ENCODE measurements at regions of chr15 and their contacts with region 1.

Region 1: GRCh38 chr15:56245871-56246814 is 2.5 kb upstream of the RFX7 start:
- DNase-seq: peak; percentile 58 to 88
- H3K4me3 ChIP-seq: peak overlapping the region; percentile 58; the same call in 1 of the 2 replicates
- H3K27ac ChIP-seq: 0 out of 2 replicates have a peak overlapping the region, but pooled peaks have one; percentile 20
- H3K4me1 ChIP-seq: peaks cover 38% of the 10 kb centered on the region
- H3K27me3 ChIP-seq: no peaks in the 10 kb centered on the region
- CTCF ChIP-seq: peak; percentile 92

Region 2: GRCh38 chr15:55846116-55846707 is 399.9 kb before region 1 on chr15:
- CTCF ChIA-PET with region 1: no interaction called
- POLR2A ChIA-PET with region 1: no interaction called
- intact Hi-C with region 1: no loop called
- DNase-seq: peak; percentile 32 to 41
- H3K4me3 ChIP-seq: no peak overlapping the region
- H3K27ac ChIP-seq: no peak overlapping the region
- H3K4me1 ChIP-seq: no peaks in the 10 kb centered on the region
- H3K27me3 ChIP-seq: no peaks in the 10 kb centered on the region
- CTCF ChIP-seq: peak; percentile 91

Region 3: DNA sequence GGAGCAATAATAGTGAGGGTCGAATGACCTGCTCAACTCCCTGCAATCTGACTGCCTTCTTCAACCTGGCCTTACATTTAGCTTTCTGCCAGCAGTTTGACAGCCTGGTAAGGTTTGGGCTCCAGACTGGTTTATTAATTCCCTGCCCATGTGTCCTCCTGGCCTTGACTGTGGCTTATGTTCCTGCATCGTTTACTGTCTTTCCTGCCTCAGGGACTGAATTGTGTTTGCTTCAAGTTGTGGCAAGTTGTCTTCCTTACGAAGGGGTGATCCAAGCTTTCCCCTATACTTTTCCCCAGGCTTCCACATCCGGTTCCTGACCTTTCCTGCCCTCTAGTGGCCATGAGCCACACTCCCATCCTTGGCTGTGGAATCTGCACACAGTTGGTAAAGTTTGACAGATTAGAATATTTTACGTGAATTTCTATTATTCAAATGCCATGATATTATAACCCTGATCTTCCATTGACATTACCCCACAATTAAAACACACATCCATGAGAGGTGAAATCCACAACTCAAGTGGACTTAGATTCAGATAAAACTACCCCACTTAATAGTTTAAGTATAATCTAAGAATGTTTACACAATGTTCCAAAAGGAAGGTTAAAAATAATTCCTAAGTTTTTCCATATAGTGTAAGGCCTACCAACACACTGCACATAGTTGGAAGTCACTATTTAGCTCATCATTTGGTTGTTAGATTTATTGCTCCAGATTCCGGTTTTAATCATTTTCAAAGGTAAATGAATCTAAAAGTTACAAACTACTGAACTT is 348.4 kb before region 1 on chr15:
- CTCF ChIA-PET with region 1: no interaction called
- POLR2A ChIA-PET with region 1: no interaction called
- intact Hi-C with region 1: loop called (anchors 5 kb)
- DNase-seq: peak in 1 of 2 experiments; percentile 35
- H3K4me3 ChIP-seq: no peak overlapping the region
- H3K27ac ChIP-seq: 0 out of 2 replicates have a peak overlapping the region, but pooled peaks have one; percentile 16
- H3K4me1 ChIP-seq: no peaks in the 10 kb centered on the region
- H3K27me3 ChIP-seq: no peaks in the 10 kb centered on the region
- CTCF ChIP-seq: peak; percentile 66

Region 4: GRCh38 chr15:56040081-56041035 is 205.8 kb before region 1 on chr15:
- CTCF ChIA-PET with region 1: interaction called, 3 read pairs
- POLR2A ChIA-PET with region 1: no interaction called
- intact Hi-C with region 1: loop called (anchors 10 kb)
- DNase-seq: peak; percentile 70 to 86
- H3K4me3 ChIP-seq: no peak overlapping the region
- H3K27ac ChIP-seq: peak overlapping the region; percentile 96
- H3K4me1 ChIP-seq: peaks cover 57% of the 10 kb centered on the region
- H3K27me3 ChIP-seq: no peaks in the 10 kb centered on the region
- CTCF ChIP-seq: no peak

Region 5: DNA sequence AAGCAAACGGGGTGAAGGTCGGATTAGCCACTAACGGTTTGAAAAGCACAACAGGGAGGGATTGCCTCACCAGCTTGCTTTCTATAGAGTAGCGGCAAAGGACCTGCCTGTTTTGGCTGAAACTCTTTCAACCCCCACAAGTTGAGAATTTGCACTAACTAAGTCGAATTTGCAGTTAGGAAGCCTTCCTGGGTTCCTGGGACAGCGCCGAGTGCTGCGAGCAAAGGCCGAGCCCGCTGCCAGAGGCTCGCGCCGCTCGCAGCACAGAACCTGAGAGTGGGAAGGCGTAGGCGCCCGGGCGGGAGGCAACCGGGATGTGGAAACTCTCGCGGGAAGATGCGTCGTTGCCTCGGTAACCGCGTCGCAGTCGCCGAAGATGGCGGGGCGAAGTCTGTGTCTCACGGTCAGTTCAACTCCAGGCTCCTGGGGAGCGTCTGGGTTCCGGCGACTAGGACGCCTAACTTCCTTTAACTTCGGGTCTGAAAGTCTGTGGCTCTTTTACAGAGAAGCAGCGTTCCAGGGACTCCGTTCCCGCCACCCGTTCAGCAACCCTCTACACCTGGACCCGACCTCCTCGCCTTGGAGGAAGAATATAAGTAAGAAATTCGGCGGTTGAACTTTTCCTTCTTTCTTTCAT is 119.0 kb after region 1 on chr15 and contains the start of gene TEX9:
- CTCF ChIA-PET with region 1: no interaction called
- POLR2A ChIA-PET with region 1: no interaction called
- intact Hi-C with region 1: loop called (anchors 5 kb)
- DNase-seq: peak; percentile 66 to 80
- H3K4me3 ChIP-seq: peak within 1 kb of the TSS; percentile 98
- H3K27ac ChIP-seq: no peak within 1 kb of the TSS; the same call in 1 of the 2 replicates
- H3K4me1 ChIP-seq: peaks cover 5% of the 10 kb centered on the region; the same call in 1 of the 2 replicates
- H3K27me3 ChIP-seq: no peaks in the 10 kb centered on the region
- CTCF ChIP-seq: no peak
- total RNA-seq, gene TEX9: 9.1 and 11.8 TPM in 2 replicates

Region 6: GRCh38 chr15:56906771-56907170 is 660.6 kb after region 1 on chr15:
- CTCF ChIA-PET with region 1: interaction called, 11 read pairs
- POLR2A ChIA-PET with region 1: no interaction called
- intact Hi-C with region 1: no loop called
- DNase-seq: no peak
- H3K4me3 ChIP-seq: no peak overlapping the region
- H3K27ac ChIP-seq: no peak overlapping the region
- H3K4me1 ChIP-seq: no peaks in the 10 kb centered on the region
- H3K27me3 ChIP-seq: no peaks in the 10 kb centered on the region
- CTCF ChIP-seq: no peak

Region 7: GRCh38 chr15:56943403-56943802 is 697.3 kb after region 1 on chr15:
- CTCF ChIA-PET with region 1: no interaction called
- POLR2A ChIA-PET with region 1: no interaction called
- intact Hi-C with region 1: no loop called
- DNase-seq: no peak
- H3K4me3 ChIP-seq: no peak overlapping the region
- H3K27ac ChIP-seq: no peak overlapping the region
- H3K4me1 ChIP-seq: no peaks in the 10 kb centered on the region
- H3K27me3 ChIP-seq: no peaks in the 10 kb centered on the region
- CTCF ChIP-seq: no peak

Measured in PC-9 (cell line).